MCF 10A (cell line): ENCODE measurements at regions of chr5 and their contacts with region 1.

Region 1: DNA sequence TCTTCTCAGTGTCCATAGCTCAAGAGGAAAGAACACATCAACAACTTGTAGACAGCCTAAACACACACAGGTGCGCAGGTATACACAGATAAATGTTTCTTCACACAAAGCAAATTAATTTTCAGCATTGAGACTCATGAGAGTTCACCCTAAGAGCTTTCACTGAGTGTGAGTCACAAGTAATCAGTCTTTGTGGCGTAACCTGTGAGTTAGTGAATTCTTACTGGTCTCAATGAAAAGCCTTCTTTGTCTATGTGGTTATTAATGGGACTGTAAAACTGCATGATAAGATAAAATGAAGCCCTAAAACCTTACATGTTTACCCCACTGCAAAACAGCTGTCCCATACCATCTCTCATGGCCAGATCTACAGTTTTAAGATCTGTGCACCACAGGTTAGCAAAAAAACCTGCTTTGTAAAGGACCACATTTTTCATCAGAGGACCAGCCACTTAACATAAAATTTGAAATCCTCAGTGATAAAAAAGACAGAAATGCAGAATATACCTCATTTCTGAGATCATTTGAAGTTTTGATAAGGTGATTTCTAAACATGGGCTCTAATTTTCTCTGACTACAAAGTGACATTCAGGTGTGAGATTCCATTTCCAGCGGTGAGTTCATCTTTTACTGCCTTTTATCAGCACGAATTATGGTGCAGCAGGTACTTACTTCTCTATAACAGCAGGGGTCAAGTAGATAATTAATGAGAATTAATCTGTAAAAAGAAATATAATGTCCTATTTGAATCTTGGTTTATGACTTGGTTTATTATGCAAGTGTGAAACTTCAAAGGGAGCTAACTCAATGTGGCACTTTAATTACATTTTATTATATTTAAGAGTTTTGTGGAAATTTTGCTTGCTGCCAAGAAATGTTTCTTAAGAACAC is 335.7 kb upstream of the PIK3R1 start:
- DNase-seq: peak; percentile 62
- H3K4me3 Mint-ChIP-seq: no peak overlapping the region
- H3K27ac Mint-ChIP-seq: peak overlapping the region; percentile 74
- H3K4me1 Mint-ChIP-seq: peaks cover 42% of the 10 kb centered on the region
- H3K27me3 Mint-ChIP-seq: no peaks in the 10 kb centered on the region
- CTCF ChIP-seq: no peak

Region 2: GRCh38 chr5:67815455-67816391 is 64.1 kb before region 1 on chr5:
- CTCF ChIA-PET with region 1: no interaction called
- POLR2A ChIA-PET with region 1: interaction called, 10 read pairs
- intact Hi-C with region 1: no loop called
- DNase-seq: peak; percentile 58
- H3K4me3 Mint-ChIP-seq: peak overlapping the region; percentile 26
- H3K27ac Mint-ChIP-seq: peak overlapping the region; percentile 82
- H3K4me1 Mint-ChIP-seq: peaks cover 26% of the 10 kb centered on the region
- H3K27me3 Mint-ChIP-seq: no peaks in the 10 kb centered on the region
- CTCF ChIP-seq: no peak

Region 3: GRCh38 chr5:68225188-68225910 is 345.5 kb after region 1 on chr5:
- CTCF ChIA-PET with region 1: no interaction called
- POLR2A ChIA-PET with region 1: interaction called, 15 read pairs
- intact Hi-C with region 1: no loop called
- DNase-seq: peak; percentile 98
- H3K4me3 Mint-ChIP-seq: peak overlapping the region; percentile 69
- H3K27ac Mint-ChIP-seq: peak overlapping the region; percentile 92
- H3K4me1 Mint-ChIP-seq: peaks cover 85% of the 10 kb centered on the region
- H3K27me3 Mint-ChIP-seq: no peaks in the 10 kb centered on the region
- CTCF ChIP-seq: no peak

Region 4: DNA sequence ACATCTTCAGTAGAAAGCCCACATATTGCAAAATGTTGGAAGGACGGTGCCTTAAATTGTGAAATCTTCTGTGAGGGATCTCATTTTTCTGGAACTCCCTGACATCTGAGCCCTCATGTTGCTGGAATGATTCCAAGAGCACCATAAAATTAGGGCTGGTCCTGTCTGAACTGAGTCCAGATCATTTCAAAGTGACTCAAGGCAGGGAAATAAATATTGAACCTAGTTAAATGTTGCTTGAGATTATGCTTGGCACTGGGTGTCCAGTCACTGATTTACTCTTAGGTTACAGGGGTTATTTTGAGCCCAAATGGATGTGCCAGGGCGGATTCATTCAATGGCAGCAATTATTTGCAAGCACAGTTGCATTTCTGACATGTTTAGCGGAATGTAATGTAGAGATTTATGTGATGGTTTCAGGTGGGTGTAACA is 772.7 kb after region 1 on chr5:
- CTCF ChIA-PET with region 1: no interaction called
- POLR2A ChIA-PET with region 1: no interaction called
- intact Hi-C with region 1: no loop called
- DNase-seq: peak; percentile 93
- H3K4me3 Mint-ChIP-seq: no peak overlapping the region
- H3K27ac Mint-ChIP-seq: no peak overlapping the region
- H3K4me1 Mint-ChIP-seq: peaks cover 28% of the 10 kb centered on the region
- H3K27me3 Mint-ChIP-seq: no peaks in the 10 kb centered on the region
- CTCF ChIP-seq: no peak